Heart left ventricle (tissue), 16 donors: ENCODE measurements at regions of chr1 and their contacts with region 1.

Region 1: DNA sequence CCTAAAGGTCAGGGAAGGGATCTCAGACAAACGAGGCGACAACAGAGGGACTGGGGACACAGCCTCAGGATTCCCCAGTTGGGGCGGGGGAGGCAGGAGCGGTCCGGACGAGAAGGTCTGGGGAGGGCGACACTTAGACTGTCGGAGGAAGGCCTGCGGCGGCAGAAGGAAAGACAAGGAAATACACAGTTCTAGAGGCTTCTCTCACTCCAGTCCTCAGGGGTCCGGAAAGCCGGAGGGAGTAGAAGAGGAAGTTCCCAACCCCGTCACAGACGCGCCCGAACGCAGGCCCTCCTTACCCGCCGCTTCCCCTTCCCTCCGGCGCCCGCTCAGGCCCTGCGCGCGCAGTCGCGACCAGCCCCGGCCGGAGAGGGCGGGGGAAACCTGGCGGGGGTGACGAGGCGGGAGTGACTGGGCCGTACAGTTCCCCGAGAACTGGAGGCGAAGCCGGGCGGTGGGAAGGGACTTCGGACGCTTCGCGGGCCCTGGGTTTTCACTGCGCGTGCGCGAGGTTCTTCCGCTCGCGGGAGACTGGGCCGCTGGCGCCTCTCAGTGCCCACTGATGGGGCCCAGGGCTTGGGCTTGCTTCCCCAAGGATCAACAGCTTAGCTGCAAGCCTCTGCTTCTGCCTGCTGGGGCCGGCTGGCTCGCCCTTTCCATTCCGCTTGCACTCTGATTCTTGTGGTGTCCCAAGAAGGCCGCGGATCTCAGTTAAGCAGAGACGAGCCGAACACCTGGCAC is at the start of gene IPP:
- DNase-seq: peak; percentile 97 to 99 (median 98)
- ATAC-seq: peak; percentile 99 to 100 (median 99)
- H3K4me3 ChIP-seq: peak within 1 kb of the TSS; percentile 56 to 78 (median 66)
- H3K27ac ChIP-seq: peak within 1 kb of the TSS; percentile 87 to 100 (median 96)
- H3K4me1 ChIP-seq: peaks cover 0 to 19% (median 9%) of the 10 kb centered on the region in 12 donors
- H3K27me3 ChIP-seq: no peaks in the 10 kb centered on the region
- CTCF ChIP-seq: peak in 5 of 12 donors; percentile 13 to 54 (median 49)
- POLR2A ChIP-seq: peak; percentile 58 to 89
- total RNA-seq, gene IPP: 6.8 to 24.7 (median 17.1) TPM

Region 2: GRCh38 chr1:45543581-45544417 is 206.7 kb before region 1 on chr1:
- intact Hi-C with region 1: no loop called
- DNase-seq: peak; percentile 61 to 78 (median 72)
- ATAC-seq: peak; percentile 37 to 95 (median 81)
- H3K4me3 ChIP-seq: peak overlapping the region in 3 of 12 donors; percentile 10 to 31 (median 19)
- H3K27ac ChIP-seq: peak overlapping the region in 4 of 12 donors; percentile 39 to 89 (median 44)
- H3K4me1 ChIP-seq: peaks cover 0 to 52% (median 3%) of the 10 kb centered on the region in 12 donors
- H3K27me3 ChIP-seq: no peaks in the 10 kb centered on the region
- CTCF ChIP-seq: no peak
- POLR2A ChIP-seq: no peak

Region 3: GRCh38 chr1:45792744-45793143 is 42.3 kb after region 1 on chr1:
- intact Hi-C with region 1: no loop called
- DNase-seq: no peak
- ATAC-seq: no peak
- H3K4me3 ChIP-seq: no peak overlapping the region
- H3K27ac ChIP-seq: no peak overlapping the region
- H3K4me1 ChIP-seq: no peaks in the 10 kb centered on the region
- H3K27me3 ChIP-seq: peaks cover 0 to 5% (median 0%) of the 10 kb centered on the region in 9 donors
- CTCF ChIP-seq: no peak
- POLR2A ChIP-seq: no peak

Region 4: GRCh38 chr1:45803301-45803780 is 52.9 kb after region 1 on chr1 and contains the start of gene MAST2:
- intact Hi-C with region 1: loop called in 8 of 10 experiments (anchors 1 to 10 kb)
- DNase-seq: peak; percentile 90 to 96 (median 92)
- ATAC-seq: peak; percentile 90 to 98 (median 96)
- H3K4me3 ChIP-seq: peak within 1 kb of the TSS; percentile 22 to 67 (median 61)
- H3K27ac ChIP-seq: peak within 1 kb of the TSS in 11 of 12 donors; percentile 44 to 87 (median 79)
- H3K4me1 ChIP-seq: peaks cover 0 to 27% (median 21%) of the 10 kb centered on the region in 12 donors
- H3K27me3 ChIP-seq: no peaks in the 10 kb centered on the region
- CTCF ChIP-seq: no peak
- POLR2A ChIP-seq: peak; percentile 15 to 82
- total RNA-seq, gene MAST2: 70.2 to 123 (median 79.7) TPM

Region 5: GRCh38 chr1:45815667-45816458 is 65.4 kb after region 1 on chr1:
- intact Hi-C with region 1: no loop called
- DNase-seq: no peak
- ATAC-seq: no peak
- H3K4me3 ChIP-seq: no peak overlapping the region
- H3K27ac ChIP-seq: no peak overlapping the region
- H3K4me1 ChIP-seq: no peaks in the 10 kb centered on the region
- H3K27me3 ChIP-seq: no peaks in the 10 kb centered on the region
- CTCF ChIP-seq: no peak
- POLR2A ChIP-seq: no peak

Region 6: DNA sequence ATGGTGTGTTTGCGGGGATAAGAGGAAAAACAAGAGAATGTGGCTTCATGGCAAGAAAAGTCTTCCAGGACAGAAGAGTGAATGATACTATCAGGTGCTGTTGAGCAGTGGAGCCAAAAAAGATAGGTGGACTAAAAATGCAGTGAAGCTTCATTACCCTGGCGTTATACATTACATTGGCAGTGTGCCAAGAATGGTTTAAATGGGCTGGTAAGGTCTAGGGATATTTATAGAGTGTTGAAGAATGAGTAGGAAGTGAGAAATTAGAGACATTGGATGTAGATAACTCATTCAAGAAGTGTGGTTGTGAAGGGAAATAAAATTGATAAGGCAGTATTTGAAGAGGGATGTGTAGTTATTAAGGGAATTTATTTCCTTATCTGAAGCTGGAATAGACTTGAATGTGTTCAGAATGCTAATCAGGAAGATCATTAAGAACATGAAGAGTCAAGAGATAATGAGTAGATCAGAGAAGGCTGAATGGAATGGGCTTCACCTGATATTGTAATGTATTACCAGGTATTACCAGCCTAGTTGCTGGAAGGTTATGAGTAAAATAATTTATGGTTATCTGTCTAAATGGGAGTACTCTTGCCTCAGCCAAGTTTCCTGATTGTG is 125.6 kb after region 1 on chr1:
- intact Hi-C with region 1: loop called in 1 of 10 experiments (anchors 10 kb)
- DNase-seq: no peak
- ATAC-seq: no peak
- H3K4me3 ChIP-seq: no peak overlapping the region
- H3K27ac ChIP-seq: no peak overlapping the region
- H3K4me1 ChIP-seq: peaks cover 0 to 7% (median 0%) of the 10 kb centered on the region in 12 donors
- H3K27me3 ChIP-seq: no peaks in the 10 kb centered on the region
- CTCF ChIP-seq: no peak
- POLR2A ChIP-seq: no peak

Region 7: DNA sequence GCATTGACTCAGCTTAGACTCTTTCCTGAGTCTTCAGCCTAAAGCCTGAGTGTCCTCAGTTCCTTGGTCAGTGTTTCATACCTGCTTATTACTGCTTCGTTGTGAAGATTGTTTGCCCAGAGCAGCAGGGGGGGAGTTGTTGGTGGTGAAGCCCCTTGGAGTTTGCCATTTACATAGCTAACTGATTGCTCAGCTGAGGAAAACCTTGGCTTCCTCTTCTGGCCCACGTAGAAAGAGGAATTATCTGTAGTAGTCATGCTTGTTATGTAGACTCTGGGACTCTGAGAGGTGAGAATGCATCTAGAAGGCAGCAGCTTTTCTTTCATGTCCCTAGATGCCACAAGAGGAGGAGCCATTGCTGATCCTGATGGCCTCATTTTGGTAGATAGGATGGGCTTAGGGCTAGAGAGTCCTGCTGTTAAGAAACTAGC is 178.8 kb after region 1 on chr1:
- intact Hi-C with region 1: no loop called
- DNase-seq: no peak
- ATAC-seq: peak in 3 of 4 donors; percentile 38 to 42 (median 41)
- H3K4me3 ChIP-seq: no peak overlapping the region
- H3K27ac ChIP-seq: no peak overlapping the region
- H3K4me1 ChIP-seq: peaks cover 0 to 33% (median 13%) of the 10 kb centered on the region in 12 donors
- H3K27me3 ChIP-seq: no peaks in the 10 kb centered on the region
- CTCF ChIP-seq: no peak
- POLR2A ChIP-seq: no peak